ENCODE measurements at regions of chr3 and their contacts with region 1.

Region 1: GRCh38 chr3:5026331-5027218 is 47.3 kb downstream of the BHLHE40 start:
- DNase-seq: peak; percentile 90
- H3K4me3 Mint-ChIP-seq: peak overlapping the region; percentile 87
- H3K27ac Mint-ChIP-seq: peak overlapping the region; percentile 93
- H3K4me1 Mint-ChIP-seq: peaks cover 49% of the 10 kb centered on the region
- H3K27me3 Mint-ChIP-seq: no peaks in the 10 kb centered on the region

Region 2: DNA sequence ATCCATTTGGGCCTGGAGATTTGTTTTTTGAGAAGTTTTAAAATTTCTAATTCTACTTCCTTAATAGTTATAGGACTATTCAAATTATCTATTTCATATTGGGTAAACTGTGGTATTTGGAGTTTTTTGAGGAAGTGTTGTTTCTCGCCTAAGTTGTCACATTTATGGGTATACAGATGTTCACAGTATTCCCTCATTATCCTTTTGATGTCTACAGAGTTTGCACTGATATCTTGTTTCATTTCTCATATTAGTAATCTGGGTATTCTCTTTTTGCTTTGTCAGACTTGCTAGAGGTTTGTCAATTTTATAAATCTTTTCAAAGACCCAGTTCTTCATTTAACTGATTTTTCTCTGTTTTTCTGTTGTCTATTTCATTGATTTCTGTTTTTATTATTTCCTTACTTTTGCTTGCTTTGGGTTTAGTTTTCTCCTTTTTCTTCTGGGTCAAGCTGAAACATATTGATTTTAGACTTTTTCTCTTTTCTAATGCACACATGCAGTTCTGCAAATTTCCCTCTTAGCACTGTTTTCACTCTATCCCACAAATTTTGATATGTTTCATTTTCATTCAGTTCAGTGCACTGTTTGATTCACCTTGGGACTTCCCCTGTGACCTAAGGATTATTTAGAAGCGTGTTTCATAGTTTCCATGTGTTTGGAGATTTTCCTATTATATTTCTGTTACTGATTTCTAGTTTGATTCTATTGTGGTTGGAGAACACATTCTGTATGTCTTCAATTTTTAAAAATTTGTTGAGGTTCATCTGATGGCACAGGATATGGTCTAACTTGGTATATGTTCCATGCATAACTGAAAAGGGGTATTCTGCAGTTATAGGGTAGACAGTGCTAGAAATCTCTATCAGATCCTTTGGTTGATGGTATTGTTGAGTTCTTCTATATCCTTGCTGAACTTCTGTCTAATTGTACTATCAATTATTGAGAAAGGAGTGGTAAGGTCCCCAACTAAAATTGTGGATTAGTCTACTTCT is 639.1 kb before region 1 on chr3:
- intact Hi-C with region 1: loop called (anchors 1 kb)
- DNase-seq: peak; percentile 48
- H3K4me3 Mint-ChIP-seq: peak overlapping the region; percentile 1
- H3K27ac Mint-ChIP-seq: peak overlapping the region; percentile 84
- H3K4me1 Mint-ChIP-seq: peaks cover 35% of the 10 kb centered on the region
- H3K27me3 Mint-ChIP-seq: no peaks in the 10 kb centered on the region

Region 3: GRCh38 chr3:4712143-4712542 is 314.4 kb before region 1 on chr3:
- intact Hi-C with region 1: loop called (anchors 1 kb)
- DNase-seq: no peak
- H3K4me3 Mint-ChIP-seq: no peak overlapping the region
- H3K27ac Mint-ChIP-seq: no peak overlapping the region
- H3K4me1 Mint-ChIP-seq: peaks cover 27% of the 10 kb centered on the region
- H3K27me3 Mint-ChIP-seq: no peaks in the 10 kb centered on the region

Region 4: GRCh38 chr3:4838621-4839022 is 188.0 kb before region 1 on chr3:
- intact Hi-C with region 1: no loop called
- DNase-seq: no peak
- H3K4me3 Mint-ChIP-seq: no peak overlapping the region
- H3K27ac Mint-ChIP-seq: peak overlapping the region; percentile 81
- H3K4me1 Mint-ChIP-seq: peaks cover 82% of the 10 kb centered on the region
- H3K27me3 Mint-ChIP-seq: no peaks in the 10 kb centered on the region

Region 5: DNA sequence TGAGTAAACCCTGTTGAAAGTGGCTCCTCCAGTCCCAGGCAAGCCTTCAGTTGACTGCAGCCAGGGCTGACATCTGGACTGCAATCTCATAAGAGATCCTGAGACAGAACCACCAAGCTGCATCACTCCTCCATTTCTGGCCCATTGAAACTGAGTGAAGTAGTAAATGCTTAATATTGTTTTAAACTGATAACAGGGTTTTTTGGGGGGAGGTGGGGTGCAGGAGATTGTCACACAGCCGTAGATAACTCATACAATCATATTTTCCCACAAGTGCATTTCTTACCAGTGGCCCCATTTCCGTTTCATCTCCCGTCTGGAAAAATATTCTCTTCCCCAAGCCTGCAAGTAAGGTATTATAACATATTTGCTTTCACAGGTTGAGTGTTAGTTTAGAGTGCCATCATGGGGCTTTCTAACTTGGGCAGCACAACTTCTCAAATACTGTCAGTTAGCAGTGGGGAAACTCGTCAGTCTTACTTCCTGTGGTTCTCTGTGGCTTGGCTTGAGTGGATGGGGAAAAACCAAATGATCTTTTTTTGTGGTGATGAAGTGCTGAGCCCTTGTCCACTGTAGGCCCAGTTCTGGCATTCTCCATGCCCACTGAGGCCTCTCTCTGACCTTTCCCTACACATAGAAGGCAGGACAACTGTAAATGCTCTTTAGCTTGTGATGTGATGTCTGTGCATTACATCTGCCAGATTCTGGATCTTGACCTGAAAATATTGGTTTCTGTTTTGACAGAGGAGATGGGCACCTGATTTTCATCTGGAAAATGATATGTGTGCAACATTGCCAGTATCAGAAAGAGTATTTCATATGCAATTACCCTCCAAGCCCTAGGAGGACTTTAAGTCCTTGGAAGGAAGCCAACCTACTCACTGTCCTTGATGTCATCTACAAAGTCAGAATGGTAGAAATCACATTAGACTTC is 137.4 kb before region 1 on chr3:
- intact Hi-C with region 1: loop called (anchors 1 kb)
- DNase-seq: peak; percentile 87
- H3K4me3 Mint-ChIP-seq: peak overlapping the region; percentile 49
- H3K27ac Mint-ChIP-seq: peak overlapping the region; percentile 89
- H3K4me1 Mint-ChIP-seq: peaks cover 44% of the 10 kb centered on the region
- H3K27me3 Mint-ChIP-seq: no peaks in the 10 kb centered on the region

Region 6: GRCh38 chr3:4953119-4953518 is 73.5 kb before region 1 on chr3:
- intact Hi-C with region 1: no loop called
- DNase-seq: no peak
- H3K4me3 Mint-ChIP-seq: no peak overlapping the region
- H3K27ac Mint-ChIP-seq: no peak overlapping the region
- H3K4me1 Mint-ChIP-seq: no peaks in the 10 kb centered on the region
- H3K27me3 Mint-ChIP-seq: no peaks in the 10 kb centered on the region

Region 7: GRCh38 chr3:4986782-4987537 is 39.6 kb before region 1 on chr3:
- intact Hi-C with region 1: loop called (anchors 1 kb)
- DNase-seq: peak; percentile 94
- H3K4me3 Mint-ChIP-seq: peak overlapping the region; percentile 84
- H3K27ac Mint-ChIP-seq: peak overlapping the region; percentile 94
- H3K4me1 Mint-ChIP-seq: peaks cover 54% of the 10 kb centered on the region
- H3K27me3 Mint-ChIP-seq: no peaks in the 10 kb centered on the region

Region 8: GRCh38 chr3:5006755-5007202 is 19.8 kb before region 1 on chr3:
- intact Hi-C with region 1: loop called (anchors 1 kb)
- DNase-seq: peak; percentile 95
- H3K4me3 Mint-ChIP-seq: peak overlapping the region; percentile 71
- H3K27ac Mint-ChIP-seq: peak overlapping the region; percentile 95
- H3K4me1 Mint-ChIP-seq: peaks cover 61% of the 10 kb centered on the region
- H3K27me3 Mint-ChIP-seq: no peaks in the 10 kb centered on the region

Region 9: DNA sequence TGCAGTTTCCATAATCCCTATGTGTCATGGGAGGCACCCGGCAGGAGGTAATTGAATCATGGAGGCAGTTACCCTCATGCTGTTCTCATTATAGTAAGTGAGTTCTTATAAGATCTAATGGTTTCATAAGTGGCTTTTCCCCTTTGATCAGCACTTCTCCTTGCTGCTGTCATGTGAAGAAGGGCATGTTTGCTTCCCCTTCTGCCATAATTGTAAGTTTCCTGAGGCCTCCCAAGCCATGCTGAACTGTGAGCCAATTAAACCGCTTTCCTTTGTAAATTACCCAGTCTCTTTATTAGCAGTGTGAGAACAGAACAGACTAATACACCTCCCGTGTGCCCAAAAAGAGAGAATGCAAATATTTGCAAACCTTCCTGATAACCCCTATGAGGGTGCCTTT is 21.2 kb after region 1 on chr3:
- intact Hi-C with region 1: no loop called
- DNase-seq: no peak
- H3K4me3 Mint-ChIP-seq: no peak overlapping the region
- H3K27ac Mint-ChIP-seq: no peak overlapping the region
- H3K4me1 Mint-ChIP-seq: peaks cover 16% of the 10 kb centered on the region
- H3K27me3 Mint-ChIP-seq: no peaks in the 10 kb centered on the region

Region 10: GRCh38 chr3:5205165-5205941 is 178.8 kb after region 1 on chr3:
- intact Hi-C with region 1: no loop called
- DNase-seq: no peak
- H3K4me3 Mint-ChIP-seq: no peak overlapping the region
- H3K27ac Mint-ChIP-seq: peak overlapping the region; percentile 70
- H3K4me1 Mint-ChIP-seq: peaks cover 16% of the 10 kb centered on the region
- H3K27me3 Mint-ChIP-seq: no peaks in the 10 kb centered on the region